Pancreas (tissue), 10 donors: ENCODE measurements at regions of chr3 and their contacts with region 1.

Region 1: DNA sequence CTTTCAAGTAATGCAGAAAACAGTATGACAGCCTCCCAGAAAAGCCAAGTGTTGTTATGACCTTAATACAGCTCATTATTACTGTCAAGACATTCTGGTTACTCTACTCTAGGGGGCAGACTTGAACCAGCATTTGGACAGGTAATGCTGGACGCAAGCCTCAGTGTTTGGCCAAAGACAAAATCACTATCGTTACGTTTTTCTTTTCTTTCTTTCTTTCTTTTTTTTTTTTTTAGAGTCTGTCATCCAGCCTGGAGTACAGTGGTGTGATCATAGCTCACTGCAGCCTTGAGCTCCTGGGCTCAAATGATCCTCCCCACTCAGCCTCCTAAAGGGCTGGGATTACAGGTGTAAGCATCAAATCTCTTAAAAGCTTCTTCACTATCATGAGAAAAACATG is 29.4 kb upstream of the TMEM45A start:
- DNase-seq: peak in 3 of 6 donors; percentile 23 to 33 (median 28)
- ATAC-seq: peak; percentile 79 to 99 (median 98)
- H3K4me3 ChIP-seq: no peak overlapping the region
- H3K27ac ChIP-seq: no peak overlapping the region
- H3K4me1 ChIP-seq: no peaks in the 10 kb centered on the region
- H3K27me3 ChIP-seq: no peaks in the 10 kb centered on the region
- CTCF ChIP-seq: peak; percentile 36 to 66 (median 58)

Region 2: DNA sequence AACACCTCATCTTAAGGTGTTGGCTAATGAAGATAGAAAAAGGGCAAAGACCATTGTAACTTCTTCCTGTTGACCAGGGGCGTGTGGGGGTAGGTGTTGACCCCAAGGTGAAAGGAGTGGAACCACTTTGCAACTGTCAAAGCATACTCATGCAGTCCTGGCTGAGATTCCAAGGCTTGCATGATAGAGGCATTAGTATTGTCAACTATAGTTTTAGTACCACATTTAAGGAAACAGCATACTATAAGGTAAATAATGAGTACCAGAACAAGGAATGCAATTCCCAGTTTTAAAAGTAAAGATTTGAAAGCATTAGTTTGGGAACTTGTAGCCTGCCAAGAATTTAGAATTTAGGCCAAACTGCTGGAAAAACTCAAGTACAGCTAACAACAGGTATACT is 118.6 kb after region 1 on chr3:
- intact Hi-C with region 1: loop called in 2 of 3 experiments (anchors 5 to 10 kb)
- DNase-seq: no peak
- ATAC-seq: no peak
- H3K4me3 ChIP-seq: no peak overlapping the region
- H3K27ac ChIP-seq: no peak overlapping the region
- H3K4me1 ChIP-seq: no peaks in the 10 kb centered on the region
- H3K27me3 ChIP-seq: no peaks in the 10 kb centered on the region
- CTCF ChIP-seq: no peak

Region 3: DNA sequence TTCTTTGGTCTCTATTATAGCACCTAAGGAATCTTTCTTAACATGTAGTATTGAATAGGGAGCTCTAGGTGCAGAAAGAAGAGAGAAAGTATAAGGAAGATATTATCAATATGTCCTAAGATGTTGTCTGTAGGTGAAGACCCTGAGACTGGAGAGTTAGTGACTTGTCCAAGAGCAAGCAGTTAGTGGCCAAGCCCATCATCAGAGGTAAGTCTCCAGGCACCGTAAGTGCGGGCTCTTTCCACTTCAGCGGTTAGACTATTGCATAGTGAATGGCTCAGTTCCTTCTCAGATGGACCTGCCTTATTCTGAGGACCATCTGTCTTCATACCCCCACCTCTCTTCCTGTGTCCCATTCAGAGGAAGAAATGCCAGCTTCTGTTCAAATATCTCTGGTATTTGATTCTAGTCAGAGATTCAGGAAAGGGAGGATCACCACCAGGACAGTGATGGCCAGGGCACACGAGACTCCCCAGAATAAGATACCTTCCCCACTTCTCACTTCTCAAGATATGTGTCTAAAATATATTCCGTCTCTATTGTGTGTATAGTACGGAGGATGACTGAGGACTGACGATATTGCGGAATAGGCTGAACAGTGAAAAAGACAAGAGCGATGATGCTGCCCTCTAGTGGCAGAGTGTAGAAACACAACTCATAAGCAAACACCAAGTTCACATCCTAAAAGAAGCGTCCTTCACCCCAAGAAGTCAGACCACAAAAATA is 127.3 kb after region 1 on chr3:
- intact Hi-C with region 1: loop called (anchors 5 to 10 kb)
- DNase-seq: peak in 3 of 6 donors; percentile 32 to 69 (median 35)
- ATAC-seq: peak; percentile 77 to 99 (median 94)
- H3K4me3 ChIP-seq: no peak overlapping the region
- H3K27ac ChIP-seq: no peak overlapping the region
- H3K4me1 ChIP-seq: peaks cover 0 to 5% (median 0%) of the 10 kb centered on the region in 3 donors
- H3K27me3 ChIP-seq: no peaks in the 10 kb centered on the region
- CTCF ChIP-seq: peak; percentile 84 to 89 (median 85)